MCF 10A (cell line): ENCODE measurements at regions of chr15 and their contacts with region 1.

Region 1: GRCh38 chr15:90320061-90320884 is 31.8 kb upstream of the ZNF774 start:
- DNase-seq: peak; percentile 92
- H3K4me3 Mint-ChIP-seq: peak overlapping the region; percentile 2
- H3K27ac Mint-ChIP-seq: peak overlapping the region; percentile 89
- H3K4me1 Mint-ChIP-seq: peaks cover 19% of the 10 kb centered on the region
- H3K27me3 Mint-ChIP-seq: no peaks in the 10 kb centered on the region
- CTCF ChIP-seq: peak; percentile 98

Region 2: GRCh38 chr15:90300988-90301706 is 19.1 kb before region 1 on chr15:
- CTCF ChIA-PET with region 1: interaction called, 12 read pairs
- POLR2A ChIA-PET with region 1: interaction called, 5 read pairs
- intact Hi-C with region 1: no loop called
- DNase-seq: peak; percentile 68
- H3K4me3 Mint-ChIP-seq: no peak overlapping the region
- H3K27ac Mint-ChIP-seq: no peak overlapping the region
- H3K4me1 Mint-ChIP-seq: peaks cover 8% of the 10 kb centered on the region
- H3K27me3 Mint-ChIP-seq: no peaks in the 10 kb centered on the region
- CTCF ChIP-seq: peak; percentile 85

Region 3: DNA sequence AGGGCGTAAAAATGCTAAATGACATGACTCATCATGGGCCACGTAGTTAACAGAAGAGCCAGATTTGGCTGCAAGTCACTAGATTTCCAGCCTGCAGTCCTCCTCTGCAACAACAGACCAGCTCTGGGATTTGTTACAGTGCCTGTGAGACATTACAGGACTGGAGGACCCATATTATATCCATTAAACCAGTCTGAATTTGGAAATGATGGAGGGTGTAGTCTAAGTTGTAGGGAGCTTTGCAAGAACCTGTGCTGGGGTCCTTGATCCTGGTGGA is 42.6 kb after region 1 on chr15:
- CTCF ChIA-PET with region 1: interaction called, 18 read pairs
- POLR2A ChIA-PET with region 1: interaction called, 5 read pairs
- intact Hi-C with region 1: no loop called
- DNase-seq: peak; percentile 67
- H3K4me3 Mint-ChIP-seq: peak overlapping the region; percentile 57
- H3K27ac Mint-ChIP-seq: peak overlapping the region; percentile 90
- H3K4me1 Mint-ChIP-seq: peaks cover 38% of the 10 kb centered on the region
- H3K27me3 Mint-ChIP-seq: no peaks in the 10 kb centered on the region
- CTCF ChIP-seq: no peak

Region 4: GRCh38 chr15:90451053-90451850 is 131.0 kb after region 1 on chr15:
- CTCF ChIA-PET with region 1: interaction called, 15 read pairs
- POLR2A ChIA-PET with region 1: interaction called, 3 read pairs
- intact Hi-C with region 1: no loop called
- DNase-seq: peak; percentile 75
- H3K4me3 Mint-ChIP-seq: no peak overlapping the region
- H3K27ac Mint-ChIP-seq: peak overlapping the region; percentile 0
- H3K4me1 Mint-ChIP-seq: peaks cover 12% of the 10 kb centered on the region
- H3K27me3 Mint-ChIP-seq: no peaks in the 10 kb centered on the region
- CTCF ChIP-seq: no peak

Region 5: GRCh38 chr15:90489514-90489913 is 169.2 kb after region 1 on chr15:
- CTCF ChIA-PET with region 1: interaction called, 86 read pairs
- POLR2A ChIA-PET with region 1: no interaction called
- intact Hi-C with region 1: no loop called
- DNase-seq: peak; percentile 31
- H3K4me3 Mint-ChIP-seq: no peak overlapping the region
- H3K27ac Mint-ChIP-seq: peak overlapping the region; percentile 6
- H3K4me1 Mint-ChIP-seq: peaks cover 15% of the 10 kb centered on the region
- H3K27me3 Mint-ChIP-seq: no peaks in the 10 kb centered on the region
- CTCF ChIP-seq: no peak

Region 6: DNA sequence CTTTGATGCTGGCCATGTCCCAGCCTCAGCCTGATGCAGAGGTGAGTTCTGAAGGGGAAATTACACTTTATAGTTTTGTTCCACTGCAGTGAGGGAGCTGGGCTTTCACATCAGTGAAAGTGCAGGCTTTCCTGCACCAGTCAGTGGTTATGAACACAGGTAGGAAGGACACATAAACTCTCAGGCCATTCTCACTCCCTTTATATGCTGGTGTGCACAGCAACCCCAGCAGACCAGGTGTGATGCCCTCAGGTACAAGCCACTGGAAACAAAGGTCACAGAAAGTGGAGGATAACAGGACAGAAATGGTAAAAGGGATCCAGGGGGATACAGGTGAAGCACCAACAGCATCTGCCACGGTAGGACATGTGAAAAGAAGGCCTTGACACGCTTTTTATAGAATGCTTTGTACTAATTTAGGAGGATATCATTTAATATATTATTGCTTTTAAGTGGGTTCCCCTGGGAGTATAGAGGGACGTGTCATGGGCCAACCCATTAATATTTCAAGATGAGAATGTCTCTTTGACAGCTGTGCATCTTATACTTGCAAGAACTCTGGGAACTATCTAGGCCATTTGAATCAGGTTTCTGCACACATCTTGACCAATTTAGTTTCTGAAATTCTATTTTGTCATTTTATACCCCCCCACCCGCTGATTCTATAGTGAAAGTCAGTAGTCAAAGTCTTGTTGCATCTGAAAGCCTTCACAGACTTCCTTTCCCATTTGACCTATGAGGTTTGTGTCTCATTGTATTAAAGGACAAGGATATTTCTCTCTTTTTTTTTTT is 371.9 kb after region 1 on chr15:
- CTCF ChIA-PET with region 1: interaction called, 5 read pairs
- POLR2A ChIA-PET with region 1: no interaction called
- intact Hi-C with region 1: loop called (anchors 1 kb)
- DNase-seq: no peak
- H3K4me3 Mint-ChIP-seq: no peak overlapping the region
- H3K27ac Mint-ChIP-seq: no peak overlapping the region
- H3K4me1 Mint-ChIP-seq: no peaks in the 10 kb centered on the region
- H3K27me3 Mint-ChIP-seq: peaks cover 10% of the 10 kb centered on the region
- CTCF ChIP-seq: no peak

Region 7: GRCh38 chr15:90720131-90720530 is 399.9 kb after region 1 on chr15:
- CTCF ChIA-PET with region 1: no interaction called
- POLR2A ChIA-PET with region 1: no interaction called
- intact Hi-C with region 1: no loop called
- DNase-seq: no peak
- H3K4me3 Mint-ChIP-seq: no peak overlapping the region
- H3K27ac Mint-ChIP-seq: no peak overlapping the region
- H3K4me1 Mint-ChIP-seq: peaks cover 13% of the 10 kb centered on the region
- H3K27me3 Mint-ChIP-seq: no peaks in the 10 kb centered on the region
- CTCF ChIP-seq: no peak